ENCODE measurements at regions of chr22 and their contacts with region 1.

Region 1: DNA sequence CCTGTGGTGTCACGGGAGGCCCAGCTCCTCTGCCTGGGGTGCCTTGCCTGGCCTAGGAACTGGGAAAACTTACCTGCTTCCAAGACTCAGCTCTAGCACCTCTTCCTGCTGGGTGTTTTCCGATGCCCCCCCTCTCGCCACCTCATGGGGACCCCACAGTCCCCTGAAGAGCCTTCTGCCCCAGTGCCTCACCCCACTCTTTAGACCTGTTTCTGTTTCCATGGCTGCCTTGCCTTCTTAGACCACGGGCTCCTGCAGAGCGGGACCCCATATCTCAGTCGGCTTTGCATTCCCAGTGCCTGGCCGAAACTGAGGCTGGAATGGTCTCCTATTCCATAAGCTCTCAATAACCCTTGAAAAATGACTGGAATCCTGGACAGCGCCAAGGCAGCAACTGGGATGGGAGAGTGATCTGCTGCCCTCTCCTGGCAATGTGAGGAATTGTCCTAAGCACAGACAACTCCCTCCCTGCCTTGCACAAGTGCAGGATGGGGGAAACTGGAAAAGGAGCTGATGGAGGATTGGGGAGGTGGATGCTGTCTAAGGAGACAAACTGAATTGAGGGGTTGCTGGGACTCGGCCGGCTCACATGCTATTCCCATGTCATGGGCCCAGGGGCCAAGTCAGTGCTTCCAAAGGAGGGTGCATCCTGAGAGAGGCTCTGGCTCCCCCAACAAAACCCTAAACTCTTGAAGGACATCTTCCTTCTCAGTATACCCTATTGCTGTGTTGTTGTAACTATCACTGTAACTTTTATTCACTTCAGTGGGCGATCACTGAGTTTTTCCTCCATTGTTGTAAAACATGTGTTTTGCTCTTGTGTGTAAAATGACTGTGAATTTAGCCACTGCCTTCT is 26.6 kb upstream of the IL17RA start:
- DNase-seq: peak; percentile 26 to 52
- ATAC-seq: peak; percentile 70 to 84
- H3K4me3 ChIP-seq: no peak overlapping the region
- H3K27ac ChIP-seq: no peak overlapping the region
- H3K4me1 ChIP-seq: peaks cover 1 to 3% of the 10 kb centered on the region in 2 donors
- H3K27me3 ChIP-seq: no peaks in the 10 kb centered on the region
- CTCF ChIP-seq: peak; percentile 82 to 95 (median 86)
- POLR2A ChIP-seq: no peak

Region 2: DNA sequence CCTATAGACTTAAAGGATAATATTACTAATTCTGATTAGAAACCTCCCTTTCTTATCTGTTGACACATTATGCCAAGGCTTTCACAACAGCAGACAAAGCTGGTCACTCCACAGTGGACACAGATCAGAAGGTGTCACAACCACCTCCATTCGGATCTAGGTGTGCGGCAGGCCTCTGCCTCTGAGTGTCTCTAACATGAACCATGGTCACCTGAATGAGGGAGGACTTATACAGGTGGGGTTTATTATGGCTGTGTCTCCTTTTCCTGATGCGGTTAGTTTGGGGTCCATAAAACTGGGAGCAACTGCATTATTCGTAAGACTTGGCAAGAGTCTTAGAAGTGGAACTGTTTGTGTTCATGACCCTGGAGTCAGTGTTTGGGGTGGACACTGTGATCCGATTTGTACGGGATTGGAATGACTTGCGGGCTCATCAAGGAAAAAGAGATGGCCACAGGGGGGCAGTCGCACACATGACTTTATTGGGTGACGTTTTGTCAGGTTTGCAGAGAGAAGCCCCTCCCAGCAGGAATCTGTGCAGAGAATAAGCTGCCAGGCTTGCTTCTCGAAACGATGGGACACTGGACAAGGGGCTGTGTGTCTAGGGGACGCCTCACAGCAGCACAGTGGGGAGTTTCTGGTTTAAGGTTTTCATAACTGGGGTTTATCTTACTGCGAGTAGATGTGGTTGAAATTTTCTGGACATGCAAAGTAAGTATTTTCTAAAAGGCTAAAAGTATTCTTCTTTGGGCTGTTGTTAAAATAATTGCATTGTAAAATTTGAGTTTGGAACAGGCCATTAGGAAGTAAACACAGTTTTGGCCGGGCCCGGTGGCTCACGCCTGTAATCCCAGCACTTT is 140.8 kb before region 1 on chr22:
- in situ Hi-C with region 1: loop called in 3 of 4 experiments (anchors 5 kb)
- intact Hi-C with region 1: loop called (anchors 1 kb)
- DNase-seq: peak; percentile 9 to 35
- ATAC-seq: peak in 1 of 2 donors; percentile 71
- H3K4me3 ChIP-seq: no peak overlapping the region
- H3K27ac ChIP-seq: no peak overlapping the region
- H3K4me1 ChIP-seq: no peaks in the 10 kb centered on the region
- H3K27me3 ChIP-seq: peaks cover 0 to 12% (median 5%) of the 10 kb centered on the region in 3 donors
- CTCF ChIP-seq: peak in 4 of 5 experiments; percentile 30 to 63 (median 56)
- POLR2A ChIP-seq: no peak

Region 3: DNA sequence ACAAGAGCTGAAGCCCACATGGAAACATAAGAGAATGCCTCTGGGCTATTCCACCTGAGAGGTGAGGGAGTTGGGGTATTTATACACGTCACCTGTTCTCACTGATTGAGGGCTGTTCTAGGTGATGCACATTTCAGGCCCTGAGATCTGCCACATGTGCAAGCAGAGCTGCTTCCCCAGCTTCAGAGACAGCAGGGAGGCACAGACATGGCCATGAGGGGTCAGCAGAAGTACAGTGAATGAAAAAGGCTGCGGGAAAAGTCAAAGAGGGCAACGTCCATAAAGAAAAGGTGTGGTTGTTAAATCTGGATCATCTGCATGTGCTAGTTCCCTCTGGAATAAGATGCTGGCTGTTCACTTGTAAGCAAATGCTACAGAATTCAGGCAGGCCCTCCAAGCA is 125.6 kb before region 1 on chr22:
- in situ Hi-C with region 1: loop called in 1 of 4 experiments (anchors 10 kb)
- intact Hi-C with region 1: no loop called
- DNase-seq: peak in 1 of 2 donors; percentile 18
- ATAC-seq: peak in 1 of 2 donors; percentile 36
- H3K4me3 ChIP-seq: no peak overlapping the region
- H3K27ac ChIP-seq: no peak overlapping the region
- H3K4me1 ChIP-seq: no peaks in the 10 kb centered on the region
- H3K27me3 ChIP-seq: no peaks in the 10 kb centered on the region
- CTCF ChIP-seq: peak in 3 of 5 experiments; percentile 10 to 31 (median 27)
- POLR2A ChIP-seq: no peak

Region 4: GRCh38 chr22:16989915-16990314 is 68.3 kb before region 1 on chr22:
- in situ Hi-C with region 1: no loop called
- intact Hi-C with region 1: no loop called
- DNase-seq: no peak
- ATAC-seq: no peak
- H3K4me3 ChIP-seq: no peak overlapping the region
- H3K27ac ChIP-seq: no peak overlapping the region
- H3K4me1 ChIP-seq: no peaks in the 10 kb centered on the region
- H3K27me3 ChIP-seq: no peaks in the 10 kb centered on the region
- CTCF ChIP-seq: no peak
- POLR2A ChIP-seq: no peak

Region 5: GRCh38 chr22:17009640-17010291 is 48.4 kb before region 1 on chr22:
- in situ Hi-C with region 1: no loop called
- intact Hi-C with region 1: no loop called
- DNase-seq: no peak
- ATAC-seq: no peak
- H3K4me3 ChIP-seq: no peak overlapping the region
- H3K27ac ChIP-seq: no peak overlapping the region
- H3K4me1 ChIP-seq: no peaks in the 10 kb centered on the region
- H3K27me3 ChIP-seq: peaks cover 3 to 17% (median 10%) of the 10 kb centered on the region in 3 donors
- CTCF ChIP-seq: no peak
- POLR2A ChIP-seq: no peak

Region 6: GRCh38 chr22:17084554-17085276 is 26.5 kb after region 1 on chr22 and contains the start of gene IL17RA:
- in situ Hi-C with region 1: no loop called
- intact Hi-C with region 1: no loop called
- DNase-seq: peak; percentile 72 to 76
- ATAC-seq: peak; percentile 87 to 89
- H3K4me3 ChIP-seq: peak within 1 kb of the TSS; percentile 72 to 90 (median 78)
- H3K27ac ChIP-seq: peak within 1 kb of the TSS; percentile 68 to 84 (median 82)
- H3K4me1 ChIP-seq: peaks cover 6 to 10% of the 10 kb centered on the region in 2 donors
- H3K27me3 ChIP-seq: peaks cover 10 to 23% (median 11%) of the 10 kb centered on the region in 3 donors
- CTCF ChIP-seq: no peak
- POLR2A ChIP-seq: peak; percentile 66 to 70
- total RNA-seq, gene IL17RA: 1.4 to 3.9 (median 3.6) TPM

Region 7: GRCh38 chr22:17266251-17266971 is 208.2 kb after region 1 on chr22:
- in situ Hi-C with region 1: no loop called
- intact Hi-C with region 1: no loop called
- DNase-seq: peak; percentile 13 to 71
- ATAC-seq: peak; percentile 14 to 26
- H3K4me3 ChIP-seq: no peak overlapping the region
- H3K27ac ChIP-seq: peak overlapping the region; percentile 93 to 98 (median 95)
- H3K4me1 ChIP-seq: peaks cover 32 to 43% of the 10 kb centered on the region in 2 donors
- H3K27me3 ChIP-seq: no peaks in the 10 kb centered on the region
- CTCF ChIP-seq: no peak
- POLR2A ChIP-seq: no peak

Measured in gastrocnemius medialis (tissue), 4 donors.